Activated naive CD4-positive, alpha-beta T cell treated with anti-CD3 and anti-CD28 coated beads, Interleukin-2, amount 10 ng/mL, durations not matched to agents 7 days and 5 days (primary cell): ENCODE measurements at regions of chr11 and their contacts with region 1.

Region 1: GRCh38 chr11:124070915-124071635 is 29.9 kb upstream of the OR10G7 start:
- DNase-seq: peak; percentile 77
- H3K4me3 Mint-ChIP-seq: no peak overlapping the region
- H3K27ac Mint-ChIP-seq: no peak overlapping the region
- H3K4me1 Mint-ChIP-seq: peaks cover 5% of the 10 kb centered on the region
- H3K27me3 Mint-ChIP-seq: peaks cover 22% of the 10 kb centered on the region

Region 2: DNA sequence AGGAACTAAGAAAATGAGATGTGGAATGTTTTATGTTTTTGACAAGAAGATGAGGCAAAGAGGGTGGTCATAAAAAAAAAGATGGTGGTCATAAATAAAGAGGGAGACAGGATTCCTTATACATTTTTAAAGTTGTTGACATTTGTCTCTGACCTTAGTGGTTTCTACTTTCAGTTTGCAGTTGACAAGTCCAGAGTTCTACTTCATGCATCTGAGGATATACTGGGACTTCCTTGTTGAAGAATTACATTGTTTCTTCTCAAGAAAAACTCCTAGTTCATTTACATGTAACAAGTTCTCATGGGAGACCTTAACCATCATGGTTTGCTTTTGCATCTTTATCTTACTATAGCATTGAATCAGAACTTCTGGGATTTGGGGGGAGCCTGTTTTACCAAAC is 318.0 kb before region 1 on chr11:
- CTCF ChIA-PET with region 1: no interaction called
- DNase-seq: no peak
- H3K4me3 Mint-ChIP-seq: no peak overlapping the region
- H3K27ac Mint-ChIP-seq: no peak overlapping the region
- H3K4me1 Mint-ChIP-seq: peaks cover 47% of the 10 kb centered on the region
- H3K27me3 Mint-ChIP-seq: peaks cover 34% of the 10 kb centered on the region

Region 3: DNA sequence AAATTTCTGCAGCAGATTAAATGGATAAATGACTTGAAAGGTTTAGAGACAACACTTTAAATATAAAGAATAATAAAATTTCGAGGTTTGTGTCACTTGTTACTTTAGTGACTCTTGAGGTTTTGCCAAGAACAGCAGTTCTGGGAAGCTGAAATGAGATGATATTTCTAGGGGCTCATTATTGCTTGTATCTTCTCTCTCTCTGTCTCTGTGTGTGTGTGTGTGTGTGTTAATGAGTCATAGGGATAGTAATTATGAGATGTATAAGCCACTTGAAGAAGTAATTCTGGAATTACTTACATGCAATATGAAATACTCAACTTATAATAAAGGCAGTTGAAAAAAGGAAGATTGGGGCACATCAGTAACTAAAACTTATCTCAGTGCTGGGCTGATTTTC is 20.3 kb before region 1 on chr11:
- CTCF ChIA-PET with region 1: no interaction called
- DNase-seq: no peak
- H3K4me3 Mint-ChIP-seq: no peak overlapping the region
- H3K27ac Mint-ChIP-seq: no peak overlapping the region
- H3K4me1 Mint-ChIP-seq: no peaks in the 10 kb centered on the region
- H3K27me3 Mint-ChIP-seq: no peaks in the 10 kb centered on the region

Region 4: GRCh38 chr11:124194698-124195410 is 123.8 kb after region 1 on chr11:
- CTCF ChIA-PET with region 1: interaction called, 40 read pairs
- DNase-seq: peak; percentile 62
- H3K4me3 Mint-ChIP-seq: no peak overlapping the region
- H3K27ac Mint-ChIP-seq: no peak overlapping the region
- H3K4me1 Mint-ChIP-seq: no peaks in the 10 kb centered on the region
- H3K27me3 Mint-ChIP-seq: no peaks in the 10 kb centered on the region